Calu3 (cell line): ENCODE measurements at regions of chr12 and their contacts with region 1.

Region 1: DNA sequence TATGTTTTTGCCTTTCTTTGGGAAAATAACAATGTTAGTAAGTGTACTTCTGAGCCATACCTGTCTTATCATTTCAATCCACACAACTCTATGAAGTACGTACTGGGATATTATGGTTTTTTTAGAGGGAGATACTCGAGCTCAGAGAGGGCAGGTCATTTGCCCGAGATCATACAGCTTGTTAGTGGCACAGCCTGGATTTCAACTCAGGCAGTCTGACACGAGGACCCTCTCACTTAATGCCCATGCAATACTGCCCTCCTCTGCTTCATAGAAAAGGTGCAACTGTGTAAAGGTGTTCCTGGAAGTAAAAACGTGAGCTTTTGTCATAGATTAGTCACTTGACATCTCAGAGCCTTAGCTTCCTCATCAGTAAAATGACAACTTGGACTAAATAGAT is 128.0 kb downstream of the NDUFA12 start:
- DNase-seq: peak; percentile 55
- H3K4me3 Mint-ChIP-seq: no peak overlapping the region
- H3K27ac Mint-ChIP-seq: no peak overlapping the region
- H3K4me1 Mint-ChIP-seq: peaks cover 10% of the 10 kb centered on the region
- H3K27me3 Mint-ChIP-seq: peaks cover 53% of the 10 kb centered on the region
- CTCF ChIP-seq: no peak

Region 2: DNA sequence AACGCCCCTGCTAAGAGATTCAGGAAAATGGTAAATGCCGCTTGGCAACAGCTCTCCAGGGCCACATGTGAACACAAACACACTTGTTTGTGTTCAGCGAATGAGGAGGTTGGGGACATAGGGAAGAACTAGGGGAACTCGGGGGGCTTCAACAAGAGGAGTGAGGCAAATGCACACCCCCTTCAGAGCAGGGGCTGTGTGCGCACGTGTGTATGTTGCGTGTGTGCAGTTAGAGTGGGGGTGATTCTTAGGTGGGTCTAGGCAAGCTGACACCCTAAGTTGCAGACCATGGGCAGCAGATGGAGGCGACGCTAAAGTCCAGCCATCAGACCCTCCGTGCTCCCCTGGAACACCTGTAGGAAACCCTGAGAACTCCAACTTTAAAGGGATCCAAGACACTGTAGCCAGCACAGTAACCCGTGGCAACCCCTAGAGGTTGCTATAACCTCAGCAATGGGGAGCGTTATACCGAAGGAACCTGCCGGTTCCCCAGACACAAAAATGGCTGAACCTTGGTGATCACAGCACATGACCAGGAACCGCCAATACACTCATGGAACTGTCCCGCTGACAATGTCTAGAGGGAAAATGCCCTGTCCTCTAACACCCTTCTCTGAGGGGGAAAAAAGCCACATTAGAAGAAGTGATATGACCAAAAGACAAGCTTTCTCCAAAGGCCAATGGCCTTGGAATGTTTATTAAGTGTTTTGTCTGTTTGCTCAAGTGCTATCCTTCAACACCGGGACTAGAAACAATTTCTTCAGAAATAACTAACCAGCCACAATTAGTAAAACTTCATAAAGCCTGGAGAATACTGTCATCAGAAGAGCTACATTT is 329.4 kb before region 1 on chr12:
- CTCF ChIA-PET with region 1: interaction called, 4 read pairs
- intact Hi-C with region 1: loop called (anchors 5 kb)
- DNase-seq: peak; percentile 64
- H3K4me3 Mint-ChIP-seq: no peak overlapping the region
- H3K27ac Mint-ChIP-seq: no peak overlapping the region
- H3K4me1 Mint-ChIP-seq: peaks cover 8% of the 10 kb centered on the region
- H3K27me3 Mint-ChIP-seq: no peaks in the 10 kb centered on the region
- CTCF ChIP-seq: peak; percentile 55

Region 3: GRCh38 chr12:94603434-94604365 is 271.8 kb before region 1 on chr12:
- CTCF ChIA-PET with region 1: no interaction called
- intact Hi-C with region 1: loop called (anchors 2 kb)
- DNase-seq: peak; percentile 83
- H3K4me3 Mint-ChIP-seq: no peak overlapping the region
- H3K27ac Mint-ChIP-seq: no peak overlapping the region
- H3K4me1 Mint-ChIP-seq: no peaks in the 10 kb centered on the region
- H3K27me3 Mint-ChIP-seq: peaks cover 10% of the 10 kb centered on the region
- CTCF ChIP-seq: peak; percentile 89

Region 4: GRCh38 chr12:94973221-94973620 is 97.7 kb after region 1 on chr12:
- CTCF ChIA-PET with region 1: no interaction called
- intact Hi-C with region 1: no loop called
- DNase-seq: no peak
- H3K4me3 Mint-ChIP-seq: no peak overlapping the region
- H3K27ac Mint-ChIP-seq: no peak overlapping the region
- H3K4me1 Mint-ChIP-seq: no peaks in the 10 kb centered on the region
- H3K27me3 Mint-ChIP-seq: no peaks in the 10 kb centered on the region
- CTCF ChIP-seq: no peak